Prostate gland (tissue), 2 donors: ENCODE measurements at regions of chr2 and their contacts with region 1.

Region 1: GRCh38 chr2:25606892-25607291 is 66.5 kb downstream of the DTNB start:
- DNase-seq: no peak
- H3K4me3 ChIP-seq: no peak overlapping the region
- H3K27ac ChIP-seq: no peak overlapping the region
- H3K4me1 ChIP-seq: no peaks in the 10 kb centered on the region
- H3K27me3 ChIP-seq: no peaks in the 10 kb centered on the region
- CTCF ChIP-seq: peak in 3 of 4 experiments; percentile 40 to 74 (median 70)
- POLR2A ChIP-seq: no peak

Region 2: DNA sequence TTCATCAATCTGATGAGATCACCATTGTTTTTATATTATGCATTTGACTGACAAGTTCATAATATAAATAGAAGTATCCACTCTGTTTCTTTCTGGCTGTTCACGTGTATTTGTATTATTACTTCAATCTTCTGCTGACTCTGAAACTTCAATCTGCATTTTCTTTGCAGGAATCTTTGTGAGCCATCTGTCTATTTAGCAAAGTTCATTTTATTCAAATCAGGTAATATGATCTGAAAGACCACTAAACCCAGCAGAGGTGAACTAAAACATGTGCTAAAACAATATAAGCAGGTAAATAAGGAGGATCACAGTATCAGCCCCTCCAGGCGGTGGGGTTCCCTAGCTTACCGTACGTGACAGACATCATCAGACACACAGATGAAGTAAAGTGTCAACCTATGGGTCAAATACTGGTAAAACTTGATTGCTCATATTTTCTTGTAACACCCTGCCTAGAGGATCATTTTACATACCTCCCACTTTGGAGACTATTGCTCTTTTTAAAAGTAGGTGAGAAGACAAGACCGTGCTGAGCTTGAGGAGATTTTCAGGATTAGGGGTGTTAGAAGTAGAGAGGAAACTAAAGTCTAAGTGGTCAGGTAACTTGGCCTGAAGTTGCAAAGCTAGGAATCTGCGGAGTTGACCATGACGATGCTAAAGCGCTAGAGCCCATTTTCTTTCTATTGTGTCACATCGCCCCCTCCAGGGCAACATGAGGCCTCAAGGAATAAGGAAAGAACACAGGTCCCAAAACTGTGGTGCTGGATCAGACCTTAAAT is 57.5 kb after region 1 on chr2:
- intact Hi-C with region 1: loop called (anchors 2 kb)
- DNase-seq: peak; percentile 55
- H3K4me3 ChIP-seq: no peak overlapping the region
- H3K27ac ChIP-seq: peak overlapping the region in 1 of 2 donors; percentile 6
- H3K4me1 ChIP-seq: no peaks in the 10 kb centered on the region
- H3K27me3 ChIP-seq: no peaks in the 10 kb centered on the region
- CTCF ChIP-seq: peak; percentile 17 to 78 (median 66)
- POLR2A ChIP-seq: no peak